GM10248 (cell line): ENCODE measurements at regions of chr3 and their contacts with region 1.

Region 1: DNA sequence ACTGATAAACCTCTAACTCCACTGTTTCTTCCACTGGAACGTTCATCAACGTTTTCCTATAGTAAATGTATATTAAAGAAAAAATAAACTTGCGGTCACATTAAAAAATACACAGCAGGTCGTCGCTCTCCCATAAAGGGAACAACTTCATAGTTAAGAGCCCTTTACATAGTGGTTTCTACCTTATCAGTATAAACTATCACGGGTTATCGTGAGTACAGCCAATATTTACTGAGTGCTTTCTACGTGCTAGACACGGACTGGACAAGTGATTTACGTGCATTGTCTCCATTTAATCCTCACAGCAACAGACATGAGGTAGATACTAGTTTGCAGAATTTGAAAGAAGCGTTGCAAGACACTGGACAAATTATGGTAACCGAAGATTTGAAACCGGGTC is 964 bp upstream of the TASOR start:
- DNase-seq: no peak
- CTCF ChIP-seq: no peak

Region 2: DNA sequence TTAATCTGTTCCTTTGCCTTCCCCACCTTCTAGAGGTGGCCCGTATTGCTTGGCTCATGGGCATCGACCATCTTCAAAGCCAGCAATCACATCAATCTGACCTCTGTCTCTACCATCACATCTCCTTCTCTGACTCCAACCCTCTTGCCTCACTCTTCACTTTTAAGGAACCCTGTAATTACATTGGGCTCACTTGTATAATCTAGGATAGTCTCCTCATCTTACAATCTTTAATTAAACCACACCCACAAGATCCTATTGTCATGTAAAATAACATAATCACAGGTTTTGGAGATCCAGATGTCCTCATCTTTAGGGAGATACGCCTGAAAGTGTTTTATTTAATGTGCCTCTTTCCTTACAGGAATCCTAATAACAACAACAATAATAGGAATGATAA is 450.3 kb before region 1 on chr3:
- CTCF ChIA-PET with region 1: no interaction called
- POLR2A ChIA-PET with region 1: no interaction called
- DNase-seq: no peak
- CTCF ChIP-seq: no peak

Region 3: GRCh38 chr3:56702490-56703315 is 18.7 kb after region 1 on chr3:
- CTCF ChIA-PET with region 1: interaction called, 13 read pairs
- POLR2A ChIA-PET with region 1: no interaction called
- DNase-seq: peak; percentile 61
- CTCF ChIP-seq: peak; percentile 67